ENCODE measurements at regions of chr19 and their contacts with region 1.

Region 1: GRCh38 chr19:14081325-14082093 is 4.1 kb downstream of the C19orf67 start:
- DNase-seq: peak; percentile 99
- ATAC-seq: peak; percentile 94
- H3K4me3 ChIP-seq: peak overlapping the region; percentile 83
- H3K27ac ChIP-seq: peak overlapping the region; percentile 86
- H3K4me1 ChIP-seq: peaks cover 4% of the 10 kb centered on the region; the same call in 1 of the 2 replicates
- H3K27me3 ChIP-seq: no peaks in the 10 kb centered on the region
- CTCF ChIP-seq: no peak
- EP300 ChIP-seq: peak in 1 of 2 experiments; percentile 9; a peak in 1 of 4 replicates
- POLR2A ChIP-seq: peak; percentile 81
- RAD21 ChIP-seq: no peak

Region 2: DNA sequence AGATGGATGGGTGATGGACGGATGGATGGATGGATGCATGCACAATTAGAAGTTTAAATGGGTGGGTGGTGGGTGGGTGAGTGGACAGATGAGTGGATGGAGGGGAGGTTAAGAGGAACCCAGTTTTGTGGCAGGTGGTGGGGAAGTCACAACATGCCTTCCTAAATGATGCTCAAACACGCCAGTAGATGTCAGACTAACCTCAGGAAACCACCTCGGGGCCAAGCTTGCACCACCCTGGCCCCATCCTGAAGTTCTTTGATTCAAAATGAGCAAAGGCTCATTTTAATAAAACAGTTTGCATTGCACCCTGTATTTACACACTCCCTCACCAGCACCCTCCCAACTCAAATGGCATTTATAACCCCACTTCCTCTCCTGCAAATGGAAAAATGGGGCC is 483.9 kb before region 1 on chr19:
- CTCF ChIA-PET with region 1: no interaction called
- POLR2A ChIA-PET with region 1: no interaction called
- RAD21 ChIA-PET with region 1: no interaction called
- SMC1A ChIA-PET with region 1: no interaction called
- in situ Hi-C with region 1: loop called (anchors 10 kb)
- intact Hi-C with region 1: loop called (anchors 5 kb)
- DNase-seq: peak; percentile 25
- ATAC-seq: peak; percentile 93
- H3K4me3 ChIP-seq: no peak overlapping the region
- H3K27ac ChIP-seq: no peak overlapping the region
- H3K4me1 ChIP-seq: no peaks in the 10 kb centered on the region
- H3K27me3 ChIP-seq: no peaks in the 10 kb centered on the region
- CTCF ChIP-seq: peak; percentile 57 to 85 (median 58); a peak in 5 of 6 replicates
- EP300 ChIP-seq: no peak
- POLR2A ChIP-seq: no peak
- RAD21 ChIP-seq: peak; percentile 88

Region 3: GRCh38 chr19:13794757-13795589 is 286.5 kb before region 1 on chr19 and contains the start of gene ZSWIM4:
- CTCF ChIA-PET with region 1: no interaction called
- POLR2A ChIA-PET with region 1: no interaction called
- RAD21 ChIA-PET with region 1: no interaction called
- SMC1A ChIA-PET with region 1: no interaction called
- in situ Hi-C with region 1: no loop called
- intact Hi-C with region 1: no loop called
- DNase-seq: peak; percentile 95
- ATAC-seq: peak; percentile 97
- H3K4me3 ChIP-seq: peak within 1 kb of the TSS; percentile 75
- H3K27ac ChIP-seq: peak within 1 kb of the TSS; percentile 84
- H3K4me1 ChIP-seq: peaks cover 16% of the 10 kb centered on the region
- H3K27me3 ChIP-seq: no peaks in the 10 kb centered on the region
- CTCF ChIP-seq: no peak
- EP300 ChIP-seq: no peak
- POLR2A ChIP-seq: peak; percentile 48
- RAD21 ChIP-seq: no peak
- polyA plus RNA-seq, gene ZSWIM4: not detected

Region 4: GRCh38 chr19:14117668-14118164 is 36.2 kb after region 1 on chr19 and contains the start of gene PRKACA:
- CTCF ChIA-PET with region 1: interaction called, 30 read pairs
- POLR2A ChIA-PET with region 1: interaction called, 3 read pairs
- RAD21 ChIA-PET with region 1: interaction called, 3 read pairs
- SMC1A ChIA-PET with region 1: interaction called, 14 read pairs
- in situ Hi-C with region 1: no loop called
- intact Hi-C with region 1: loop called (anchors 5 kb)
- DNase-seq: peak; percentile 91
- ATAC-seq: peak; percentile 99
- H3K4me3 ChIP-seq: peak within 1 kb of the TSS; percentile 70
- H3K27ac ChIP-seq: peak within 1 kb of the TSS; percentile 45
- H3K4me1 ChIP-seq: peaks cover 16% of the 10 kb centered on the region
- H3K27me3 ChIP-seq: no peaks in the 10 kb centered on the region
- CTCF ChIP-seq: no peak
- EP300 ChIP-seq: no peak
- POLR2A ChIP-seq: peak; percentile 54; the same call in 1 of the 2 replicates
- RAD21 ChIP-seq: no peak
- polyA plus RNA-seq, gene PRKACA: 0.53 to 1.3 TPM